ENCODE measurements at regions of chr22 and their contacts with region 1.

Region 1: DNA sequence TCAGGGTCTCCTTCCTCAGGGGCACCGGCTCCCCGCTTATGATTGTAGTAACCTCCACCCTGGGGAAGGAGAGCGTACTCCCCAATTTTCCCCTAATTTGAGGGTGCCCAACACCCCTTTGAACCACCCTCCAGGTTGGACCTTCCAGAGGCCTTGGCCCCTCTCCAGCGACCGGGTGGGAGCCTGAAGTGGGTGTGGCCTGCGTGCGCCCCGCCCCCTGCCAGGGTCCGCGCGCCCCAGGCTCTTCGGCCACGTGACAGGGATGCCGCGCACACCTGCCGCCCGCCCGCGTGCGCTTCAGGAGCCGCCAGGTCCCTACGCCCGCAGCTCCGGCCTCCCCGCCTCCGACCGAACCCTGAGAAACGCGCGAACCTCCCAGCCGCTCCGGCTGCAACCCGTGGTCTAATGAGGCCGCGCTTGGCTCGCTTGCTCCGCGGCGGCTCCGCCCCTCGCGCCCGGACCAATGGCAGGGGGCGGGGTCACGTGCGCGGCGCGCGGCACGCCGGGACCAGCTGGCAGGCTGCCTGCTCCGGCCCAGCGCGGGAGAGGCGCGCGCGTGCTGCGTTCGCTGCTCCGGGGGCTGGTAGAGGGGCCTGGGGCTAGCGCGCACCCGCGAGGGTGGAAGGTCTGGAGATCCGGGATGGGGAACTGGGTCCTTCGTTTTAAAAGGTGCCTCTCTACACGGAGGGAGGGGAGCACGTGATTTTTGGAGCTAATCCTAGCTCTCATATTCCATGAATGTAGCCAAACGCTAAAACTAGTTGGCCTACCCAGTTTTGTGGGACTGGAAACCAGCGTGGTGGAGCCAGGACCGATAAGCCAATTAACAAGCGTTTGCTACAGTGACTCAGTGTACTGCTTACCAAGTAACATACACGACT is at the start of gene FOXRED2:
- DNase-seq: peak; percentile 98
- CTCF ChIP-seq: no peak

Region 2: DNA sequence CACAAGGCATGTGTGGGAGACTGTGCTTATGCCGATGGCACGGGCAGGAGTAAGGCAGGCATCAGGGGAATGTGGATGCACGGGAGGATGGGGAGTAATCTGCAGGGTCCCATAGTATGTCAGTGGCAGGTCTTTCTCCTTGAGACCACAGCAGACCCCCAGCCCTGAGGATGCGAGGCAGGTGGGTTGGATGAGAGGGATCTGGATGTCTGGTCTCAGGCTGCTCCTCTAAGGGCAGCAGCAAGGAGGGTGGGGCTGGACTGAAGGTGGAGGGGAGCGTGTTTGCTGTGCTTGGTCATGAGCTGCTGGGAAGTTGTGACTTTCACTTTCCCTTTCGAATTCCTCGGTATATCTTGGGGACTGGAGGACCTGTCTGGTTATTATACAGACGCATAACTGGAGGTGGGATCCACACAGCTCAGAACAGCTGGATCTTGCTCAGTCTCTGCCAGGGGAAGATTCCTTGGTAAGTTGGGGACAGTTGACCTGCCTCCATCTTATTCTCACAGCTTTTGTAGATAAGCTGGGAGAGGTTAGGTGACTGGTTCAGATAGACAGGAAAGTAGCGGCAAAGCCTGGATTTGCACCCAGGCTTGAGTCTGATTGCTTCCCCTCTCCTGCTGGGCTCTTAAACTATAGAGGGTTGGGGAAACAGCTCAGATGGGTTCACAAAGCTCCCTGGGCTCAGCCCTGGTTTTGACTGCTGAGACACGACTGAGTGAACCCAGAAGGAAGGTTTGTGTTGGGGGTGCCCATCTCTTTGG is 253.9 kb before region 1 on chr22 and contains the start of gene APOL1:
- CTCF ChIA-PET with region 1: no interaction called
- POLR2A ChIA-PET with region 1: no interaction called
- DNase-seq: peak; percentile 66
- CTCF ChIP-seq: no peak

Region 3: DNA sequence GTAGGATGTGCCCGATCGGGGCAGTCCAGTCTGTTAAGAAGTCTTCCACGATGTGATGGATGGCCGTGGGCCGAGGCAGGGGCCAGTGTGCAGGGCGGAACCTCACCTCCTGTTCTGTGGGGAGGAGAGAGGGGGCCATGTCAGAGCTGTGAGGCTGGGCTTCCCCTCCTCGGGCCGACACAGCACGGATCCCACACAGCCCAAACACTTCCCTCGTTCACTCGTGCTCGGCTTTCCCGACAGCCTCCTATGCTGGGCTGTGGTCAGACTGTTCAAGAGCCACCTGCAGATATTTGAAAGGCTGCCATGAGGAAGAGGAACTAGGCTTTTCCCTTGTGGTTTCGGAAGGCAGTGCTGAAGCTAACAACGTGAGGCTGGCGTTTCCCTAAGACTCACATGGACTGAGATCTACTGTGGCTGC is 13.2 kb before region 1 on chr22:
- CTCF ChIA-PET with region 1: interaction called, 15 read pairs
- POLR2A ChIA-PET with region 1: interaction called, 6 read pairs
- DNase-seq: peak; percentile 77
- CTCF ChIP-seq: no peak

Region 4: DNA sequence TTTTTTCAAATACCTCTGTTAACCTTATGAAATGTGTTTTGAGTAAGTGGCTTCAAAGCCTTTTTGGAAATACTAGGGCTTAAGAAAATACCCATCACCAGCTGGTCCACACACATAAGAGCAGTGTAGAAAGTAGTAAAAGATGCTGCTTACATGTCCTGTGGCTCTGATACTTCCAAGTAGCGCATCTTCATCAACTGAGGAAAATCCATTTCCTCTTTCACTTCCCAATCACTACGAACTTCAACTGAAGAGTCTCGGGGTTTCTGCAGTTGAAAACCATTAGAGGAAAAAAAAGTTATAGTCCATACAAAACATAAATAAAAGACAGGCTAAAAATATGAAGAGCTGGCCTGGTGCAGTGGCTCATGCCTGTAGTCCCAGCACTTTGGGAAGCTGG is 13.5 kb after region 1 on chr22:
- CTCF ChIA-PET with region 1: interaction called, 31 read pairs
- POLR2A ChIA-PET with region 1: interaction called, 7 read pairs
- DNase-seq: no peak
- CTCF ChIP-seq: no peak

Measured in GM10248 (cell line).